IMR-90 (cell line): ENCODE measurements at regions of chr17 and their contacts with region 1.

Region 1: GRCh38 chr17:80855948-80856862 is 135.4 kb upstream of the CHMP6 start:
- DNase-seq: peak; percentile 100
- ATAC-seq: peak; percentile 75
- H3K4me3 ChIP-seq: no peak overlapping the region
- H3K27ac ChIP-seq: peak overlapping the region; percentile 99
- H3K4me1 ChIP-seq: peaks cover 51% of the 10 kb centered on the region
- H3K27me3 ChIP-seq: no peaks in the 10 kb centered on the region
- CTCF ChIP-seq: no peak
- POLR2A ChIP-seq: peak; percentile 37; the same call in 1 of the 2 replicates
- RAD21 ChIP-seq: peak; percentile 41

Region 2: GRCh38 chr17:80477647-80478478 is 378.3 kb before region 1 on chr17:
- CTCF ChIA-PET with region 1: no interaction called
- POLR2A ChIA-PET with region 1: no interaction called
- dilution Hi-C with region 1: no loop called
- in situ Hi-C with region 1: no loop called
- intact Hi-C with region 1: loop called (anchors 10 kb)
- DNase-seq: peak; percentile 59
- ATAC-seq: peak; percentile 73
- H3K4me3 ChIP-seq: peak overlapping the region; percentile 47
- H3K27ac ChIP-seq: no peak overlapping the region
- H3K4me1 ChIP-seq: peaks cover 4% of the 10 kb centered on the region; the same call in 1 of the 2 replicates
- H3K27me3 ChIP-seq: peaks cover 63% of the 10 kb centered on the region
- CTCF ChIP-seq: peak; percentile 79
- POLR2A ChIP-seq: no peak
- RAD21 ChIP-seq: peak; percentile 83

Region 3: GRCh38 chr17:80586846-80587228 is 269.4 kb before region 1 on chr17:
- CTCF ChIA-PET with region 1: no interaction called
- POLR2A ChIA-PET with region 1: no interaction called
- dilution Hi-C with region 1: no loop called
- in situ Hi-C with region 1: no loop called
- intact Hi-C with region 1: loop called (anchors 5 kb)
- DNase-seq: peak; percentile 90
- ATAC-seq: peak; percentile 80
- H3K4me3 ChIP-seq: peak overlapping the region; percentile 6; the same call in 1 of the 2 replicates
- H3K27ac ChIP-seq: peak overlapping the region; percentile 78
- H3K4me1 ChIP-seq: peaks cover 18% of the 10 kb centered on the region
- H3K27me3 ChIP-seq: no peaks in the 10 kb centered on the region
- CTCF ChIP-seq: no peak
- POLR2A ChIP-seq: peak; percentile 52; the same call in 1 of the 2 replicates
- RAD21 ChIP-seq: no peak

Region 4: DNA sequence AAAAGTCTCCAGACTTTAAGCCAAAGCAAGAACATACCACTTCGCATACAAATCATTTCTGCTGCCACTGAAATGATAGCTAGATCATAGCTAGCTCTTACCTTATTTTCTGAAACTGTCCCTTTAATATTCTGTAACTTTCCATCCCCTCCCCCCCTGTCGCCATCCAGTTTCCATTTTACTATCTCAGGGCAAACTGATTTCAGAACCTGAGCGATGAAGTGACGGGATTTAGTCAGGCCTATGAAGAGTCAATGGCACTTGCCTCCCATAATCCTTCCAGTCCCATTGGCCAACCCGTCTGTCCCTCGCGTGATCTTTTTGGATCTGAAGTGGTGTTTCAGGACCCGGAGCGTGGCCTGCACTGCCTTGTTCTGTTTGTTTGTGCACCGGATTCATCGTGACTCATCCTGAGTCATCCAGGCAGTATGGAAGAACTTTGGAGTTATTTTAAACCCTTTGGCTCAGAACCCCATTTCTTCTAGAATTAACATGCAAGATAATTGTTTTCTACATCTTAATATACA is 64.4 kb before region 1 on chr17:
- CTCF ChIA-PET with region 1: no interaction called
- POLR2A ChIA-PET with region 1: no interaction called
- dilution Hi-C with region 1: no loop called
- in situ Hi-C with region 1: no loop called
- intact Hi-C with region 1: loop called (anchors 1 kb)
- DNase-seq: peak; percentile 100
- ATAC-seq: peak; percentile 77
- H3K4me3 ChIP-seq: no peak overlapping the region
- H3K27ac ChIP-seq: peak overlapping the region; percentile 97
- H3K4me1 ChIP-seq: peaks cover 51% of the 10 kb centered on the region
- H3K27me3 ChIP-seq: no peaks in the 10 kb centered on the region
- CTCF ChIP-seq: no peak
- POLR2A ChIP-seq: no peak; the same call in 1 of the 2 replicates
- RAD21 ChIP-seq: peak; percentile 13; the same call in 1 of the 2 replicates

Region 5: GRCh38 chr17:80832888-80833583 is 23.2 kb before region 1 on chr17:
- CTCF ChIA-PET with region 1: no interaction called
- POLR2A ChIA-PET with region 1: interaction called, 3 read pairs
- dilution Hi-C with region 1: no loop called
- in situ Hi-C with region 1: no loop called
- intact Hi-C with region 1: loop called (anchors 1 kb)
- DNase-seq: peak; percentile 99
- ATAC-seq: peak; percentile 95
- H3K4me3 ChIP-seq: peak overlapping the region; percentile 45
- H3K27ac ChIP-seq: peak overlapping the region; percentile 94
- H3K4me1 ChIP-seq: peaks cover 19% of the 10 kb centered on the region
- H3K27me3 ChIP-seq: no peaks in the 10 kb centered on the region
- CTCF ChIP-seq: 0 out of 2 replicates have a peak, but pooled peaks have one; percentile 1
- POLR2A ChIP-seq: peak; percentile 93
- RAD21 ChIP-seq: peak; percentile 34; the same call in 1 of the 2 replicates